Caco-2 (cell line): ENCODE measurements at regions of chr19 and their contacts with region 1.

Region 1: GRCh38 chr19:18557474-18558201 is at the start of gene KXD1:
- DNase-seq: peak; percentile 91 to 97
- H3K4me3 ChIP-seq: peak within 1 kb of the TSS; percentile 98
- H3K4me3 Mint-ChIP-seq: peak within 1 kb of the TSS; percentile 70
- H3K27ac Mint-ChIP-seq: peak within 1 kb of the TSS; percentile 60
- H3K4me1 ChIP-seq: no peaks in the 10 kb centered on the region
- H3K4me1 Mint-ChIP-seq: no peaks in the 10 kb centered on the region
- H3K27me3 ChIP-seq: no peaks in the 10 kb centered on the region
- H3K27me3 Mint-ChIP-seq: no peaks in the 10 kb centered on the region
- CTCF ChIP-seq: no peak
- total RNA-seq, gene KXD1: 77.5 and 80.2 TPM in 2 replicates

Region 2: DNA sequence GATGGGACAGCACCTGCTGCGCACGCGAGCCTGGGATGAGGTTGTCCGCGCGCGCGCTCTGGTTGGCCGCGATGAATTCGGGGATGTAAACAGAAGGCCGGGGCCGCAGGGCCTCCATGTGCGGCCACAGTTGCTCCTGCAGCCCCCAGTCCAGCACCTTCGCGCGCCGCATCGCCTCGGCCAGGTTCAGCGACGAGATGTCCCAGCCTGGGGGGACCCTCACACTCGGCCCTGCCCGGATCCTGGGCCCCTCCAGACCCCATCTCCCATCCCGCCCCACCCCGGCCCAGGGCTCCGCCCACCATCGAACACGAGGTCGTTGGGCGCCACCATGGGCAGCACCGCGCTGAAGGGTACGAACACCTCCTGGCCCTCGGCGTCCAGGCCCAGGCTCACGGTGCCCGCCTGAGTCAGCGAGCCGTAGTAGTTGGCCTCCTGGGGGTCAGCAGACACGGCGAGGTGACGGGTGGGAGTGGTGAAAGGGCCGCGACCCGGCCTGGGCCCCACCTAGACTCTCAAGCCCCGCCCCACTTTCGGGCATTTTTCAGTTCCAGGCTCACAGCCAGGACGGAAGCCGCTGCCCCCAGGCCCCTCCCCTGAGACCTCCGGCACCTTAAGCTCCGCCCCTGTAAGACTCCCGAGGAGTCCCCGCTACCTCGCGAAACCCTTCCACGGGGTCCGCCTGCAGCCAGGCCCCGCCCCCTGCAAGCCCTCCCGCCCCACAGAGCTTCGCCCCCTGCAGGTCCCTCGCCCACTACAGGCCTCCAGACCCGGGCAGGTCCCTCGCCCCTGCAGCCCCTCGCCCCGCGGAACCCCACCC is 120.8 kb before region 1 on chr19:
- CTCF ChIA-PET with region 1: no interaction called
- POLR2A ChIA-PET with region 1: no interaction called
- intact Hi-C with region 1: no loop called
- DNase-seq: peak; percentile 50 to 73
- H3K4me3 ChIP-seq: peak overlapping the region; percentile 75
- H3K4me3 Mint-ChIP-seq: peak overlapping the region; percentile 78
- H3K27ac Mint-ChIP-seq: no peak overlapping the region
- H3K4me1 ChIP-seq: peaks cover 10% of the 10 kb centered on the region
- H3K4me1 Mint-ChIP-seq: peaks cover 10% of the 10 kb centered on the region
- H3K27me3 ChIP-seq: no peaks in the 10 kb centered on the region
- H3K27me3 Mint-ChIP-seq: no peaks in the 10 kb centered on the region
- CTCF ChIP-seq: no peak

Region 3: GRCh38 chr19:18538115-18538514 is 19.5 kb before region 1 on chr19:
- CTCF ChIA-PET with region 1: no interaction called
- POLR2A ChIA-PET with region 1: no interaction called
- intact Hi-C with region 1: no loop called
- DNase-seq: no peak
- H3K4me3 ChIP-seq: no peak overlapping the region
- H3K4me3 Mint-ChIP-seq: no peak overlapping the region
- H3K27ac Mint-ChIP-seq: no peak overlapping the region
- H3K4me1 ChIP-seq: peaks cover 5% of the 10 kb centered on the region; the same call in 1 of the 2 replicates
- H3K4me1 Mint-ChIP-seq: no peaks in the 10 kb centered on the region
- H3K27me3 ChIP-seq: no peaks in the 10 kb centered on the region
- H3K27me3 Mint-ChIP-seq: no peaks in the 10 kb centered on the region
- CTCF ChIP-seq: no peak

Region 4: DNA sequence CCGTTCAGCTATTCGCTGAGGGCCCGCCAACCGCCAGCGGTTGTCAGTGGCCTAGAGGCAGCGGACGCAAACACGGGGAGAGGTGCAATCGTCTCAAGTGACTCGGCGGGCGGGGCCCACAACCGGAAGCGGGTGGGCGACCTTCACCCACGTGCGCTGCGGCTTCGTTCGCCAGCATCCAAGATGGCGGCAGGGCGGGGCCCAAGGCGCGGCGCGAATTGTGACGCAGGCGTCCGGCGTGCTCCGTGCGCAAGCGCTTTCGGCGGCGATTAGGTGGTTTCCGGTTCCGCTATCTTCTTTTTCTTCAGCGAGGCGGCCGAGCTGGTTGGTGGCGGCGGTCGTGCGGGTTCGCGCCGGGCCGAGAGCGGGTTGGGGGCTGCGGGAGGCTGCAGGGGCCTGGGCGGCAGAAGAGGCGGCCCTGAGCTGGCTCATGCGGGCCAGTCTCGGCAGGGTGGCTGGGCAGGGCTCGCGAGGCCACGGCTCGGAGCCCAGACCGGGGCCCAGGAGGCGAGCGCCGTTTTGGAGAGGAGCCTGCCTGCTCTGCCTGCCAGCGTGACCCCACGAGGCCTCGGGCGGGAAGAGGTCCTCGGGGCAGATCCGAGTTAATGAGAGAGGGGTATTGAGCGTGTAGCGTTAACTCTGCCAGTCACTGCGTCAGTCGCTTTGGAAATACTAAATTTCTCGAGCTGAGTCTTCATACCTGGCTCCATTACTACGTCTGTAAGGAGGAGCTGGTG is 14.1 kb after region 1 on chr19 and contains the start of gene UBA52:
- CTCF ChIA-PET with region 1: interaction called, 3 read pairs
- POLR2A ChIA-PET with region 1: interaction called, 10 read pairs
- intact Hi-C with region 1: loop called (anchors 1 kb)
- DNase-seq: peak; percentile 97 to 98
- H3K4me3 ChIP-seq: peak within 1 kb of the TSS; percentile 98
- H3K4me3 Mint-ChIP-seq: peak within 1 kb of the TSS; percentile 93
- H3K27ac Mint-ChIP-seq: peak within 1 kb of the TSS; percentile 98
- H3K4me1 ChIP-seq: peaks cover 9% of the 10 kb centered on the region; the same call in 1 of the 2 replicates
- H3K4me1 Mint-ChIP-seq: peaks cover 11% of the 10 kb centered on the region
- H3K27me3 ChIP-seq: no peaks in the 10 kb centered on the region
- H3K27me3 Mint-ChIP-seq: no peaks in the 10 kb centered on the region
- CTCF ChIP-seq: no peak
- total RNA-seq, gene UBA52: 1,276 and 1,389 TPM in 2 replicates